Motor neuron (in vitro differentiated cells): ENCODE measurements at regions of chr1 and their contacts with region 1.

Region 1: DNA sequence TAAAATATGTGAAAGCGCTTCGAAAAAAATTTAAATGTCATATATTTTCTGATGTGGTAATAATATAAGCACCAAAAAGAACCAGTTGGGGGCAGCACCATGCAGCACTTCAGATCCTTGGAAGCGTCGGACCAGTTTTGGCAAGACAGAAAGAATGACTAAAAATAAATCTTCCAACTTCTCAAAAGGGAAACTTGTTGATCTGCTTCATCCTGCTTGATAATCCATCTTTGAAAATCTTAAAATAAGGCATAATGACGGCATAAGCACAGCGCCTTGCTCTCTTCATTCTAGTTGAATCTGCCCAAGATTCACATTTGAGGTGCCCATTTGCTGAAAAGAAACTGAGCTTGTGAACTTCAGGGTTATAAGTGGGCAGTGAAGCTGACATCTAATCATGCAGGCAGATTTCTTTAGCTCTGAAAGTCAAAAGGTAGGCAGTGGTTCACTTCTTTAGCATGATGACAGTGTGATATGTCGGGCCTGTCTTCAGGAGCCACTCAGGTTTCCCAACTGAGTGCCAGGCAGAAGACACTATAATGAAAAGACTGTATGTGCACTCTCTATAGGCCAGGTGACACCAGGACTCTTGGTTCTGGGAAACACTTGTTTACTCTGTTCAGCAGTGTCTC is 19.8 kb upstream of the MUTYH start:
- ATAC-seq: peak in 6 of 8 experiments; percentile 13 to 39 (median 31)
- H3K4me3 ChIP-seq: no peak overlapping the region
- H3K27ac ChIP-seq: no peak overlapping the region
- H3K4me1 ChIP-seq: peaks cover 11 to 13% of the 10 kb centered on the region in 2 donors

Region 2: DNA sequence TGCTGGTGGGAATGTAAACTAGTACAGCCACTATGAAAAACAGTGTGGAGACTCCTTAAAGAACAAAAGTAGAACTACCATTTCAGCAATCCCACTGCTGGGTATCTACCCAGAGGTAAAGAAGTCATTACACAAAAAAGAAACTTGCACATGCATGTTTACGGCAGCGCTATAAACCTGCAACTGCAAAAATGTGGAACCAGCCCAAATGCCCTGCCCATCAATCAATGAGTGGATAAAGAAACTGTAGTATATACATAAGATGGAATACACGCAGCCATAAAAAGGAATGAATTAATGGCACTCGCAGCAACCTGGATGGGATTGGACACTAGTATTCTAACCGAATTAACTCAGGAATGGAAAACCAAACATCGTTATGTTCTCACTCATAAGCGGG is 204.6 kb before region 1 on chr1:
- in situ Hi-C with region 1: no loop called
- ATAC-seq: no peak
- H3K4me3 ChIP-seq: no peak overlapping the region
- H3K27ac ChIP-seq: no peak overlapping the region
- H3K4me1 ChIP-seq: no peaks in the 10 kb centered on the region

Region 3: GRCh38 chr1:45550401-45551351 is 190.7 kb after region 1 on chr1 and contains the start of gene AKR1A1:
- in situ Hi-C with region 1: loop called in 1 of 9 experiments (anchors 25 kb)
- ATAC-seq: peak; percentile 91 to 96 (median 94)
- H3K4me3 ChIP-seq: peak within 1 kb of the TSS; percentile 54 to 80 (median 59)
- H3K27ac ChIP-seq: peak within 1 kb of the TSS; percentile 90 to 96
- H3K4me1 ChIP-seq: peaks cover 13 to 16% of the 10 kb centered on the region in 2 donors
- total RNA-seq, gene AKR1A1: 88.1 to 272 (median 151) TPM